Left cardiac atrium (tissue), 4 donors: ENCODE measurements at regions of chr20 and their contacts with region 1.

Region 1: GRCh38 chr20:50790651-50791277 is 4.1 kb upstream of the BCAS4 start:
- DNase-seq: peak; percentile 91
- ATAC-seq: peak; percentile 85 to 88

Region 2: GRCh38 chr20:50913690-50914375 is 123.1 kb after region 1 on chr20:
- intact Hi-C with region 1: loop called in 1 of 2 experiments (anchors 10 kb)
- DNase-seq: no peak
- ATAC-seq: peak; percentile 53 to 78

Region 3: GRCh38 chr20:50929299-50930138 is 138.8 kb after region 1 on chr20:
- intact Hi-C with region 1: loop called in 1 of 2 experiments (anchors 2 kb)
- DNase-seq: peak; percentile 91
- ATAC-seq: peak; percentile 62 to 73

Region 4: GRCh38 chr20:51306503-51307358 is 516.0 kb after region 1 on chr20:
- intact Hi-C with region 1: loop called in 1 of 2 experiments (anchors 10 kb)
- DNase-seq: peak; percentile 77
- ATAC-seq: peak; percentile 92 to 97